Right ventricle myocardium inferior (tissue), 1 donor: ENCODE measurements at regions of chr18 and their contacts with region 1.

Region 1: DNA sequence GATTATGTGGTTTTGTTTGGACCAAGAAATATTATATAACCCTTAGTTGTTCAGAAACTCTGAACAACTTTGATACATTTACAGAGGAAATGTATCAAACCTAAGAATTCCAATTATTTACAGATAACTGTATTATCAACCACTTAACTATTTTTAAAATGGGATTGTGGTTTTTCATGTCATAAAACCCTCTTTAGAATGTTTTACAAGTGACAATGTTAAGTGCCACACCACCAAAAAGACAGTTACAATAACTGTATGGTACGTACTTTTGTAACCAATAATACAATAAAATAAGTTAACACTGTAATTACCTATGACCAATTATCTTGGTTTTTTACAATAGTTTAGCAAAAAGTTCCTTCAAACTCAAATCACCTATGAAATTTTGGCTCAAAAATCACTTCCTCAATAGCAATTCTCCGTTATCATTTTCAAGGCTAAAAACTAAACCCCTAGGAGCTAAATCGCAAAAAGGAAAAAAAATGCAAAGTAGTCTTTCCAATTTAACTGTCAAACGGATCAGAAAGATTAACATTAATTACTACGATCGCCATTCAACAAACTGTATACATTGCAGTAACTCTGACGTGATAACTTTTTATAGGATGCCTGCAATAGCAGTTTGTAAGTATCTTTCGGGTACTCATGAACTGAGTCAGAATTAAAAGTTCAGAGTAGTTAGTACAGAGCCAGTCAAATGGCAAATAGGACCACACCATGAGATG is 1.5 kb downstream of the ROCK1 start:
- DNase-seq: no peak
- ATAC-seq: no peak

Region 2: DNA sequence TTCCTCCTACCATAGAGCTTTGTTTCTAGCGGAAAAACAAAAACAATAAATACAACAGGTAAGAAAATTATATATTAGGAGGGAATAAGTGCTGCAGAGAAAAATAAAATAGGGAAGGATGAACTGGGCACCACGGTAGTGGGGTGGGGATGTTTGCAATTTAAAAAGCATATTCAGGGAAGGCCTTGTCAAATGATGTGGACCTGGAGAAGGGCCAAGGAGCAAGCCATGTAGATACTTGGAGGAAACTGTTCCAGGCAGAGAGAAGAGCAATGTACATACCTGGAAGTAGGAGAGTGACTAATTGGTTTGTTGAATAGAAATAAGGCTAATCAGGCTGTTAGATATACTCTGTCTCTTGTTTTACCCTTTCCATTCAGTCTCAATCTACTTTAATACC is 135.0 kb before region 1 on chr18:
- intact Hi-C with region 1: loop called (anchors 5 kb)
- DNase-seq: no peak
- ATAC-seq: no peak

Region 3: GRCh38 chr18:21004726-21005125 is 105.4 kb before region 1 on chr18:
- intact Hi-C with region 1: loop called (anchors 10 kb)
- DNase-seq: no peak
- ATAC-seq: peak; percentile 93

Region 4: GRCh38 chr18:21053127-21053526 is 57.0 kb before region 1 on chr18:
- intact Hi-C with region 1: loop called (anchors 5 kb)
- DNase-seq: no peak
- ATAC-seq: peak; percentile 37